Right ventricle myocardium inferior (tissue), 1 donor: ENCODE measurements at regions of chr22 and their contacts with region 1.

Region 1: GRCh38 chr22:45577746-45578523 is 75.3 kb downstream of the FBLN1 start:
- DNase-seq: peak; percentile 91
- ATAC-seq: peak; percentile 75

Region 2: DNA sequence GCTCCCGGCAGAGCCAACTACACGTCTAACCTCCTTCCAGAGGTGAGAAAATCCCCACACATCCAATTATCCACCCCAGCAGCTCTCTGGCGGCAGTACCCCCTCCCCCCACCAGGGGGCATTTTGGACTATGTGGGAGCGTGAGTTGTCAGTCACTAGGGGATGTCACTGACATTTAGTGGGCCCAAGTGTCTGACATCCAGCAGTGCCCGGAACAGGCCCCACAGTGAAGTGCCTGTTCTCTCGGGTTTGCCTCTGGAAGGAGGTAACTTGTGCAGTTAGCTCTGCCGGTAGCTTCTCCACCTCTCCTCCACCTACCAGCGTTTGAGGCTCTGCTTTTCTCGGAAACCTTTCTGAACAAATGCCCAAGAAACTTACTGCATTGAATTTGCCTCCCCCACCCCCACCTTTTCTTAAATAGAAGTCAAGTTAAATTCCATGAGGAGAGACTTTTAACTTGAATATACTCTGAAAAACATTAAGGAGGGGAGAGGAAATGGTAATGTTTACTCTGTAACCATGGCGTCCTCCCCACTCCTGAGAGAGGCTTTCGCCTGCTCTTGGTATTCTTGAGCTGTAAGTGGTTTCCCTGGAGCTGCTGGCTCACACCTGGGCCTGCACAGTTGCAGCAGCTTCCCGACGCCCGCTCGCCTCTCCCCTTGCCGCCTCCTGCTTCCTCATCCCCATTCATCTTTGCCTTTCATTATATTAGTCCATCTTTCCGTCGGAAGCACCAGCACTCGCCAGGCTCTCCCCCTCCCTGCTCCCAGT is 286.2 kb after region 1 on chr22:
- intact Hi-C with region 1: loop called (anchors 5 kb)
- DNase-seq: no peak
- ATAC-seq: peak; percentile 70